Naive thymus-derived CD4-positive, alpha-beta T cell (primary cell): ENCODE measurements at regions of chr9 and their contacts with region 1.

Region 1: GRCh38 chr9:2764353-2764752 is 47.0 kb downstream of the KCNV2 start:
- DNase-seq: peak in 7 of 9 donors; percentile 3 to 49 (median 23)
- ATAC-seq: peak; percentile 62
- H3K4me3 ChIP-seq: no peak overlapping the region
- H3K4me3 Mint-ChIP-seq: peak overlapping the region in 7 of 10 donors; percentile 3 to 72 (median 36)
- H3K27ac ChIP-seq: peak overlapping the region; percentile 8
- H3K27ac Mint-ChIP-seq: peak overlapping the region; percentile 47 to 93 (median 81)
- H3K4me1 ChIP-seq: peaks cover 0 to 7% of the 10 kb centered on the region in 2 donors
- H3K4me1 Mint-ChIP-seq: peaks cover 21 to 39% (median 33%) of the 10 kb centered on the region in 7 donors
- H3K27me3 ChIP-seq: no peaks in the 10 kb centered on the region
- H3K27me3 Mint-ChIP-seq: no peaks in the 10 kb centered on the region

Region 2: DNA sequence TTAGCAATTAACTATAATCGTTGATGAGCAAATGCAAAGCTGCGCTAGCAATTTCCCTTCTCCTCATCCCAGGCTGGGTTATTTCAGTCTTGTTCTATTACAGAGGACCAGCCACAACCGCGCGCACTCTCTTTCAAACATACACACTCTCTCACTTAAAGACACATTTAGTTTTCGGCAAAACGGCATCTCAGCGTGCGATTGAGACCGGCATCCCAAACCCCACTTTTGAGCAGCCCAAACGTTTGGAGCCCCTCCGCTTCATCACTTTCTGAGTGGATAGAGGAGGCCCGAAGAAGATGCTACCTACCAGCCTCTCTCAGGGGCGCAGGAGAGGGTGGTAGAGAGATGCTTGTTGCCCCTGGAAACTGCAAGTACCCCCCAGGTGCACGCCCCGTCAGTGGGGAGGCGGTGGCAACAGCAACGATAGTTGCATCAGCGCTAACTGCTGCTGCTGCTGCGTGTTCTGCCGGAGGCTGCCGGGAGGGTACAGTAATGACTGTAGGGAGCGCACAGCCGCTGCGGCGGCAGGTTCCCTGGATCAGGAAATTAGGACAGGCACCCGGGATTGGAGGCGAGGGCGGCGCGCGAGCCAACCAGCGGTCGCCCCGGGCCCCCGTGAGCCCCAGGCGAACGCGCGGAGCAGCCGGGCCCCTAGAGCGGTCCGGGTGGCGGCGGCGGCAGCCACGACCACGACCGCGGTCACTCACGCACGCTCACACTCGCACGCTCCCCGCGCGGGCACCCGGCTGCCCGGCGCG is 143.3 kb before region 1 on chr9:
- CTCF ChIA-PET with region 1: no interaction called
- POLR2A ChIA-PET with region 1: no interaction called
- intact Hi-C with region 1: loop called in 1 of 2 experiments (anchors 1 kb)
- DNase-seq: peak in 2 of 9 donors; percentile 7 to 65
- ATAC-seq: peak; percentile 54
- H3K4me3 ChIP-seq: no peak overlapping the region
- H3K4me3 Mint-ChIP-seq: peak overlapping the region; percentile 57 to 89 (median 77)
- H3K27ac ChIP-seq: no peak overlapping the region
- H3K27ac Mint-ChIP-seq: peak overlapping the region in 1 of 9 donors; percentile 82
- H3K4me1 ChIP-seq: peaks cover 0 to 7% of the 10 kb centered on the region in 2 donors
- H3K4me1 Mint-ChIP-seq: peaks cover 12 to 30% (median 21%) of the 10 kb centered on the region in 7 donors
- H3K27me3 ChIP-seq: peaks cover 0 to 9% of the 10 kb centered on the region in 2 donors
- H3K27me3 Mint-ChIP-seq: peaks cover 50 to 73% (median 65%) of the 10 kb centered on the region in 5 donors

Region 3: DNA sequence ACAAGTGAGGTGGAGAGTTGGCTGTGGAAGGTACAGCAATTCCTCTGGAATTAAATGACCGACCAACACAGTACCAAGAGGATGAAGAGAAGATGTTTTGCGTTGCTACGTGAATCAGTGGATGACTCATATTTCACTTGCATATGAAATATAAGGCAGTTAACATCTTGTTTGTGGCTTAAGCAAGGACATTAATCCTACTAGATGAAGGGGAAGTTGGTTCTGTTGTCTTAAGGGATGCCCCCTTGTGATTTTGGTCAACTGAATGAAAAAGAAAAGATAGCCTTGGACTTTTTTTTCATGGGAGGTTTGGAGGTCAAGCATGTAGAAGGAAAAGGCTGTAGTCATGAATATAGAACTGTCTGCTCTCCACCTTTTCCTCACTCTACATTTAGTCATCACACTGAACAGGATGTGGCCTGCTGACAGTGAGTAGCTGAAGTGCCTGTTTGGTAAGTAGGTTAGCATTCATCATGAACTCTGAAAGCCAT is 108.9 kb before region 1 on chr9:
- CTCF ChIA-PET with region 1: no interaction called
- POLR2A ChIA-PET with region 1: no interaction called
- intact Hi-C with region 1: loop called in 1 of 2 experiments (anchors 1 kb)
- DNase-seq: peak in 1 of 9 donors; percentile 35
- ATAC-seq: peak; percentile 80
- H3K4me3 ChIP-seq: no peak overlapping the region
- H3K4me3 Mint-ChIP-seq: peak overlapping the region in 1 of 10 donors; percentile 35
- H3K27ac ChIP-seq: no peak overlapping the region
- H3K27ac Mint-ChIP-seq: peak overlapping the region in 2 of 9 donors; percentile 67 to 91
- H3K4me1 ChIP-seq: no peaks in the 10 kb centered on the region
- H3K4me1 Mint-ChIP-seq: peaks cover 0 to 24% (median 0%) of the 10 kb centered on the region in 7 donors
- H3K27me3 ChIP-seq: no peaks in the 10 kb centered on the region
- H3K27me3 Mint-ChIP-seq: no peaks in the 10 kb centered on the region

Region 4: DNA sequence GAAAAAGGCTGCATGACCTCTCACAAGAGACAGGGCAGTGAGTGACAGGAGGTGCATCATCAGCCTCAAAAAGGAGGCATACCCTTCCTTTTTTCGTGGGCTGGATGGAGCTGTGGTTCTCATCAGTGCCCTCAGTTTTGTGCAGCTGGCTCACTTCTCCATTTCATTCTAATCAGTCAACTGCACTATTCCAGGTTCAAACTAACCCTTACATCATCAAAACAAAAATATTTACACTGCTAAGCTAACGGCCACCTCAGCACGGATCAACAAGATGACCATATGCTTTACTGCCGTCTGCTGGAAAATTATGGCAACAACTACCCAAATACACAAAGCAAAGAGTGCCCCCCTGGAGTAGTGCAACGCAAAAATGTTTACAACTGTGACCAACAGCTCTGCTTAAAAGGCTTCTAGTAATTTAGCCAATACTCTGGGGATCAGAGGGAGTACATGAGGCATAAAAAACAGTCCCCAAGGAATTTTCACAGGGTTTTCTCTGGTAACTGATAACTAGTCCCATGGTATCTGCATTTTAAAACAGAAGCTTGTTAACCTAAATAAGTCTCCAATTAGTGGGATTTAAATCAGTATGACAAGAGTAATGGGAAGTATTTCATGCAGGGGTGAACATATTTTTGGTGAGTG is 36.3 kb before region 1 on chr9:
- CTCF ChIA-PET with region 1: no interaction called
- POLR2A ChIA-PET with region 1: no interaction called
- intact Hi-C with region 1: no loop called
- DNase-seq: no peak
- ATAC-seq: peak; percentile 42
- H3K4me3 ChIP-seq: no peak overlapping the region
- H3K4me3 Mint-ChIP-seq: no peak overlapping the region
- H3K27ac ChIP-seq: no peak overlapping the region
- H3K27ac Mint-ChIP-seq: peak overlapping the region in 1 of 9 donors; percentile 59
- H3K4me1 ChIP-seq: no peaks in the 10 kb centered on the region
- H3K4me1 Mint-ChIP-seq: peaks cover 0 to 4% (median 0%) of the 10 kb centered on the region in 7 donors
- H3K27me3 ChIP-seq: no peaks in the 10 kb centered on the region
- H3K27me3 Mint-ChIP-seq: no peaks in the 10 kb centered on the region